Right ventricle myocardium inferior (tissue), 1 donor: ENCODE measurements at regions of chr3 and their contacts with region 1.

Region 1: GRCh38 chr3:195522254-195523023 is 20.7 kb downstream of the PPP1R2 start:
- DNase-seq: no peak
- ATAC-seq: no peak

Region 2: DNA sequence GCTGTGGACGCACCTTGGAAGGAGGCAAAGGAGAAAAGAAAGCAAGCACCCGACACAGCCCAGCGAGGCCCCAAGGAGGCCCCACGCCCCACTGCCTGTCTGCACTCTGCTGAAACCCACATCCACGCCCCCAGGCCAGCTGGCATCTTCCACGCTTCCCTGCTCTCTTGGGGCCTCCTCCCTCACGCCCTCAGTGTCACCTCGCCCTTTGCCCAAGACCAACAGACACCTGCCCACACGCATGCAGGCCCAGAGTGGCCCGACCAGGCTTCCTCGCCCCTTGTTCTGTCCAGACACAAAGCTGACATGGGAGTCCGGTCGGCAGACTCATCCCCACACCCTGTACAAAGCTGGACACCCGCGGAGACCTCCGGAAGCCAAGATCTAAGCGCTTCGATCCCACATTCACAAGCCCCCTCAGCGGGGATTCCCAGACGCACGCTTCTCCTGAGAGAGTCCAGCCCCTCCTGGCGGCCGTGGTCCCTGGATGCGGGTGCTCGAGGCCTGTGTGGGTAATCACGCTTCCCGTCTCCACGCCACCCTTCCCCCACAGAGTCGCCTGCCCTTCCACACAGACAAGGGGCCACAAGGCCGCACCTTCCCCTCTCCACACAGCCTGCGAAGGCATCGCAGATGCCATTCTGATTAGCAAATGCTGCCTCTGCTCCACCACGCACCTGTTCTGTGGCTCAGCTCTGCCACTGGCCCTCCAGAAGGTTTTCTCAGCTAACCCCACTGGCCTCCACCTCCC is 428.1 kb before region 1 on chr3:
- intact Hi-C with region 1: no loop called
- DNase-seq: peak; percentile 62
- ATAC-seq: no peak

Region 3: DNA sequence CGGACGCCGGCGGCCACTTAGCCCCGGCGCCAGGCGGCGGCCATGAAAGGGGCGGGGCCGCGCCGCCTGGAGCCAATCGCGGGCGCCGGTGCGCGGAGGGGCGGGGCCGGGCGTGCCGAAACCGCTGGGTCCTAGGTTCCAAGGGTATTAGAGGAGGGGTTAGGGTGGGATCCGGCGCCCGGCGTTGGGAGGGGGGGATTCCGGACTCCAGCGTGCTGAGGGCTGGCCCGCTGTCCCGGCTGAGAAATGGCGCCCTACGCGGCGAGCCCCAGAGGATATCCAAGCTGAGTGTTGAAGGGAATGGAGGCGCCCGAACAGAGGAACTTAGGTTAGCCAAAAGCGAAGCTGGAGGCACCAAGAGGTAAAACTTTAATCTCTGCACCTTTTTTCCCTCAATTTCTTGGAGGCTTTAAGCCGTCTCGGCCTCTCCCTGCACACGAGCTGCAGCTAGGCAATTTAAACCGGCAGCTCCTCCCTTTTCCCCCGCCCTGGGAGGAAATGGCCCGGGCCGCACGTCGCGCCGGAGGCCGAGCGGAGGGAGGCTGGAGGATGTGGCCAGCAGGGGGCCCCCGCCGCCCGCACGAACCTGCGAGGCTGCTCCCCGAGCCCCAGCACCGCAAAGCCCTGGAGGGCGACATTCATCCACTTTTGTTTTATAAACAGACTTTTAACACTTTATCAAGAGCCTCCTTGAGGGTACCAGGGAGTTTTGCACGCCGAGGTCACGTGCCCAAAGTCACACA is 251.2 kb before region 1 on chr3 and contains the start of gene XXYLT1:
- intact Hi-C with region 1: loop called (anchors 1 kb)
- DNase-seq: peak; percentile 95
- ATAC-seq: peak; percentile 97
- total RNA-seq, gene XXYLT1: 2.7 TPM

Region 4: GRCh38 chr3:195297446-195297845 is 225.0 kb before region 1 on chr3:
- intact Hi-C with region 1: no loop called
- DNase-seq: no peak
- ATAC-seq: no peak